ENCODE measurements at regions of chr18 and their contacts with region 1.

Region 1: GRCh38 chr18:57107140-57107832 is 39.6 kb upstream of the BOD1L2 start:
- DNase-seq: no peak
- H3K4me3 ChIP-seq: no peak overlapping the region
- H3K27ac ChIP-seq: no peak overlapping the region
- H3K4me1 ChIP-seq: no peaks in the 10 kb centered on the region
- H3K27me3 ChIP-seq: no peaks in the 10 kb centered on the region
- CTCF ChIP-seq: no peak

Region 2: GRCh38 chr18:57150828-57151227 is 43.5 kb after region 1 on chr18:
- intact Hi-C with region 1: loop called (anchors 2 kb)
- DNase-seq: no peak
- H3K4me3 ChIP-seq: no peak overlapping the region
- H3K27ac ChIP-seq: no peak overlapping the region
- H3K4me1 ChIP-seq: no peaks in the 10 kb centered on the region
- H3K27me3 ChIP-seq: no peaks in the 10 kb centered on the region
- CTCF ChIP-seq: no peak

Region 3: GRCh38 chr18:57294547-57294946 is 187.3 kb after region 1 on chr18:
- intact Hi-C with region 1: no loop called
- DNase-seq: no peak
- H3K4me3 ChIP-seq: no peak overlapping the region
- H3K27ac ChIP-seq: no peak overlapping the region
- H3K4me1 ChIP-seq: no peaks in the 10 kb centered on the region
- H3K27me3 ChIP-seq: no peaks in the 10 kb centered on the region
- CTCF ChIP-seq: no peak

Region 4: GRCh38 chr18:57931038-57931437 is 823.8 kb after region 1 on chr18:
- intact Hi-C with region 1: no loop called
- DNase-seq: no peak
- H3K4me3 ChIP-seq: no peak overlapping the region
- H3K27ac ChIP-seq: no peak overlapping the region
- H3K4me1 ChIP-seq: peaks cover 3% of the 10 kb centered on the region
- H3K27me3 ChIP-seq: no peaks in the 10 kb centered on the region
- CTCF ChIP-seq: no peak

Measured in colonic mucosa (tissue), 4 donors.